SK-N-SH (cell line): ENCODE measurements at regions of chr1 and their contacts with region 1.

Region 1: GRCh38 chr1:8718850-8719361 is 98.5 kb downstream of the RERE start:
- DNase-seq: peak; percentile 45
- H3K4me3 ChIP-seq: no peak overlapping the region
- H3K27ac ChIP-seq: peak overlapping the region in 1 of 2 experiments; percentile 84; a peak in 2 of 4 replicates
- H3K4me1 ChIP-seq: peaks cover 8 to 15% of the 10 kb centered on the region in 2 experiments; a peak in 3 of 4 replicates
- H3K27me3 ChIP-seq: no peaks in the 10 kb centered on the region
- CTCF ChIP-seq: peak; percentile 43
- EP300 ChIP-seq: peak in 1 of 2 experiments; percentile 62; a peak in 2 of 4 replicates
- RAD21 ChIP-seq: peak; percentile 64

Region 2: DNA sequence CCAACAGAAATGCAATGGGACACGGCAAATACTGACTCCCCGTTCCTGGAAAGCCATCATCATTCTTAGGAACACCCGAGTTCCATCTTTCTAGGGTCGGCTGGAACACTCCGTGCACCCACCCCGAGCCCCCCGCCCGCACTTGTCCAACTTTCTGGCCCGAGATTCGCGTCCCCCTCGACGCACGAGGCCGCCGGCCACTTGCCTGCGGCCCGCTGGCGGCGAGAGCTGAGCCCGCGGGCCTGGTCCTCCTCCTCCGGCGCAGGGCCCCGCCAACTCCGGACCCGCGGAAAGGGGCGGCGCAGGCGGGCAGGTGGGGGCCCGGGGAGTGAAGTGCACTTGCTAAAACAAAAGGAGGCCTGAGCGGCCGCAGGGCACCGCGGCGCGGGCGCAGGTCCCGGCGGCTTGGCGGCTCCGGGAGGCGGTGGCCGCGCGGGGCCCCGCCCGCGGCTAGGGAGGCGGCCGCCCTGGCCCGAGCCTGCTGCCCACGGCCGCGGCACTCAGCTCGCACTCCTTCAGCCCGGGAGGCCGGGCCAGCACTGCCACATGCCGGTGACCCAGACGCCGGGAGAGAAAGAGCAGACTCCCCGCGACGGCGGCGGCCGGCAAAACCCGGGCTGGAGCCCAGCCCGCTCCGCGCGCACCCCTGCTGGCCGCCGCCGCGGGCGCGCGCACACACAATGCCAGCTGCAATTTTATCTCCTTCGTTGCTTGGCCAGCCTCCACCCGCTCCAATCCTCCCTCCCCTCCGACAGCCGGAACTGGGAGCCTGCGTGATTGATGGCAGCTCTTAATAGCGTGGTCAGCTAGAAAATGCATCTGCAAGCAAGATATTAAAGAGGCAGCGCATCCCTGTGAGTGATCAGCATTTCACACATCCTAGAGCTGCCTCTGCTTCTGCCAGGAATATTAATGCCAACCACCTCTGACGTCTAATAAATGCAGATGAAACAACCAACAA is 15.8 kb before region 1 on chr1:
- CTCF ChIA-PET with region 1: interaction called, 24 read pairs
- POLR2A ChIA-PET with region 1: no interaction called
- DNase-seq: peak; percentile 96
- H3K4me3 ChIP-seq: peak overlapping the region; percentile 51 to 64
- H3K27ac ChIP-seq: peak overlapping the region; percentile 73 to 93
- H3K4me1 ChIP-seq: peaks cover 30 to 48% of the 10 kb centered on the region in 2 experiments; a peak in 3 of 4 replicates
- H3K27me3 ChIP-seq: no peaks in the 10 kb centered on the region
- CTCF ChIP-seq: no peak
- EP300 ChIP-seq: peak; percentile 32 to 89; a peak in 3 of 4 replicates
- RAD21 ChIP-seq: no peak; the same call in 1 of the 2 replicates

Region 3: DNA sequence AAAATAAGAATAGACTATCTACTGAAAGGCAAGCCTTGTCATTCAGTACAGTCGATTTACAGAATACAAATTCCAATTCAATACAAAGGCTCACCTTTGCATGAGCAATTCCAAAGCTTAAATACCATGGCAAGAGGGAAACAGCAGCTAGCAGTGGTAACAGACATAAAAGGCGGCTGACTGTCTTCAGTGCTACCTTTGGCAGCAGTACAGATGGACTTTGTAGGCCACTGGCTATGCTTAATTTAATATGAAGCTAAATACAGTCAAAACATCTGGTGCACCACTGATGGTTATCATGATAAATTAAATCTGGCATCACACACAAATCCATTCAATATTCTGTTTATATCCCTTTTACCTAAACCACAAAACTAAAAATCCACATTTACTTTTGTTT is 36.1 kb after region 1 on chr1:
- CTCF ChIA-PET with region 1: interaction called, 11 read pairs
- POLR2A ChIA-PET with region 1: no interaction called
- DNase-seq: peak; percentile 70
- H3K4me3 ChIP-seq: no peak overlapping the region
- H3K27ac ChIP-seq: peak overlapping the region in 1 of 2 experiments; percentile 98; a peak in 2 of 4 replicates
- H3K4me1 ChIP-seq: peaks cover 16 to 27% of the 10 kb centered on the region in 2 experiments; a peak in 3 of 4 replicates
- H3K27me3 ChIP-seq: no peaks in the 10 kb centered on the region
- CTCF ChIP-seq: no peak
- EP300 ChIP-seq: peak in 1 of 2 experiments; percentile 97; a peak in 2 of 4 replicates
- RAD21 ChIP-seq: no peak; the same call in 1 of the 2 replicates

Region 4: DNA sequence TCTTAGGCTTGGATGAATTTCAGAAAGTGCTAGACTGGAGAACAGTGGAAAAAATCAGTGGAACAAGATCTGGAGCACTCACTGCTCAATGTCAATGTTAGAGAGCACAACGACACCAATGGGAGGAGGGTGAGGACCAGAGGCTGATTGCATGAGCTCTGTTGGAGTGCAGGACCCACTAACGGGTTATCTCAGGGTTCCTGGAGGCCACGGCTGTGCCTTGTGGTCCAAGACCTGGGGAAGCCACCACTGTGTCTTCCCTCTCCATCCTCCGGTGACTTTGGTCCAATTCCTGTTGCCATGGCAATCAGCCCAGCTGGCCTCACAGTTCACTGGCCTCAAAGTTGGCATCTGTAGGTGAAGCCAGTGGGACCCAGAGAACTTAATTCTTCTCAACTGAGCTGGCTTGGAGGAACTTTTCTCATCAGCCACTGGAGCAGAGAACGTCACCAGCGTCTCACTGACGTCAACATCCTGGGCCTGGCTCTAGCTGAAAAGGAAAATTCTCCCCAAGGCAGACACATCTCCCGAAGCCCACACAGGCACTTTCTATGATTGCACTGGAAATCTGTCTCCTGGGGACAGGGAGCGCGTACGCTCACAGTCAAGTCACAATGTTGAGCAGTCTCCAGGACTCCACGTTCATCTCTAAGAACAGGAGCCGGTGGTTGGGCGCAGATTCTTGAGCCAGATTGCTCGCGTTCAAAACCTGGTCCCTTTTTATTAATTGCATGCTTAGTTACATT is 431.8 kb after region 1 on chr1:
- CTCF ChIA-PET with region 1: no interaction called
- POLR2A ChIA-PET with region 1: no interaction called
- DNase-seq: no peak
- H3K4me3 ChIP-seq: no peak overlapping the region
- H3K27ac ChIP-seq: no peak overlapping the region
- H3K4me1 ChIP-seq: no peaks in the 10 kb centered on the region
- H3K27me3 ChIP-seq: no peaks in the 10 kb centered on the region
- CTCF ChIP-seq: no peak
- EP300 ChIP-seq: no peak
- RAD21 ChIP-seq: no peak